Activated CD8-positive, alpha-beta T cell treated with anti-CD3 and anti-CD28 coated beads, Interleukin-2, amount 10 ng/mL, durations not matched to agents 7 days and 5 days (primary cell): ENCODE measurements at regions of chr1 and their contacts with region 1.

Region 1: DNA sequence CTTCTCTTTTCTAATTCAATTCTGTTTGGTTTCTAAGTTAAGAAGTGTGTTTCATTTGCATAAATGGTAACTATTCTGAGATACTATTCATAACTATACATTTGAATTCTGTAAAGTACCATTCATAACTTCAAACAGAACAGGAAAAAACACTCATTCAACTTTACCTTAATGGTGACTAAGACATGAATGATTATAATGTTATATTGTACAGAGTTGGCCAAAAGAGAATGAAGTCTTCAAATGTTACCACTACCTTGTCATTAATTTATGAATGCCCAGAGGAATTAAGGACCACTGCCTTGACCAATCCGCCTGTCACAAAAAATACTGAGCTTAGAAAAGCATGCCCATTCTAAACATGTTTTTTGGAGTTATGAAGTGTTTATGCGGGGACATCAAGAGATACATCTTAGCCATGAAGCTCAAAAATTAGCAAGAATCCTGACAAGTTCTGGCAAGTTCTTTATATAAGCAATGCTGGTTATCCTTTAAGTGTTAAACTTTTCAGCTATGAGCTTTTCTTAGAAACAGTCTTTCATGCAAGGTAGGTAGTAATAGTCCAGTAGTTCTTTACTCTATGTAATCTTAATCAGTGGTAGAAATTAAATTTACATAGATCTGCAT is 7.9 kb downstream of the WASF2 start:
- DNase-seq: no peak
- ATAC-seq: no peak
- H3K4me3 Mint-ChIP-seq: no peak overlapping the region
- H3K27ac Mint-ChIP-seq: no peak overlapping the region
- H3K4me1 Mint-ChIP-seq: peaks cover 24% of the 10 kb centered on the region
- H3K27me3 Mint-ChIP-seq: no peaks in the 10 kb centered on the region

Region 2: DNA sequence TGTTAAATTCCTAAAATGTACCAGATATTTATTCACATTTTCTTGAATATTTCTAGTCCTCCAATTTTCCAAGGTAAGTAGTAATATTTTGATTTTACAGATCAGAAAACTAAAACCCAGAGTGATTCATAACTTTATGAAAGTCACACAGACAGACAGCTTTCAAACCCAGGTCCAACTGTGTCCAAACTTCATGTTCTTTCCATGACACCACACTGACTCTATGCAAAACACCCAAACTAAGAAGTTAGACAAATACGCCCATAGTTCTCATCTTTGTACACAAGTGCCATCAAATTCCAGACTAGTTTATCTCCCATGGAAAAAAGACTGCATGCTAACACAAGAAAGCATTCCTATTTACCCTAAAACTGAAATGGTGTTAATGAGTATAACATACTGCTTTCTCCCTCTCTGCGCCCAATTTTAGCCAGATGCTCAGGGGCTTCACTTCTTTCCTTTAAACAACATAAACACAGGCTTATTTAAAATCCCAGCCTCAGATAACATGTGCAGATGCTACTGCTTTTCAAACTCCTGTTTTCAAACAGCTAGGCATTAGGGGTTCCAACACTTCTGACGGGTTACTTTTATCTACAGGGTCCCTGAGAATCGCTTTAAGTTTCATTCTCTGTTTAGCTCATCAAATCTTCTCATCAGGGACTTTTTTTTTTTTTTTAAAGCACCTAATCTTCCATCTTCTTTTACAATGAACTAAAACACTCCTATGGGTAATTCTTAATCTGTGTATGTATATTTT is 36.8 kb before region 1 on chr1:
- CTCF ChIA-PET with region 1: no interaction called
- POLR2A ChIA-PET with region 1: no interaction called
- DNase-seq: no peak
- ATAC-seq: peak; percentile 68
- H3K4me3 Mint-ChIP-seq: no peak overlapping the region
- H3K27ac Mint-ChIP-seq: peak overlapping the region; percentile 59
- H3K4me1 Mint-ChIP-seq: peaks cover 35% of the 10 kb centered on the region
- H3K27me3 Mint-ChIP-seq: no peaks in the 10 kb centered on the region

Region 3: DNA sequence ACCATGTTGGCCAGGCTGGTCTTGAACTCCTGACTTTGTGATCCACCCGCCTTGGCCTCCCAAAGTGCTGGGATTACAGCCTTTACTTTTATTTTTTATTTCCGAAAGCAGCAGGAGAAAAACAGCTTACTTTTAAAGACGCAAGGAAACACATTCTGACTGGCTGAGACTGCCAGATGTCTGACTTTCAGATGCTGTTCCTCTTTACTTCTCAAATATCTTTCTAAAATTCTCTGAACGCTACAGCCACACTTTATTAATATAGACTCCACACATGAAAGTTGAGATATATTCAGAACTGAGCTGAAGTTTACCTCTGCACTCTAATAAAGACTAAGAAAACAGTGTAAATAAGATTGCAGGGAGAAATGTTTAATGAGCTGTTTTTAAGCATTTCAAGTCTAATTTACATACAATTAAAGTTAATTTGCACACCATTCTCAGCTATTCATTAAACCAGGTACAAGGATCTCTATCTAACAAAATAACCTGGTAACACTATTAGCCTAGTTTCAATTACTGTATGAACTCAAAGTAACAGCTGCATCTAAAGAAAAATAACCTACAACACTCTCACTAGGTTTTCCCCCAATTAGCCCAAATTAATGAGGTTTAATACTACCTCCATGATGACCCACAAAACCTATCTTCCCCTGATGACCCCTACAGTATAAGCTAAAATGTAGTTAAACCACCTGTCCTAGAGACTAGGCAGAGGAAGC is 17.0 kb before region 1 on chr1:
- CTCF ChIA-PET with region 1: interaction called, 10 read pairs
- POLR2A ChIA-PET with region 1: no interaction called
- DNase-seq: no peak
- ATAC-seq: no peak
- H3K4me3 Mint-ChIP-seq: no peak overlapping the region
- H3K27ac Mint-ChIP-seq: no peak overlapping the region
- H3K4me1 Mint-ChIP-seq: peaks cover 25% of the 10 kb centered on the region
- H3K27me3 Mint-ChIP-seq: no peaks in the 10 kb centered on the region